MCF 10A (cell line): ENCODE measurements at regions of chr3 and their contacts with region 1.

Region 1: GRCh38 chr3:21484057-21484827 is 266.8 kb downstream of the ZNF385D start:
- DNase-seq: peak; percentile 85
- H3K4me3 Mint-ChIP-seq: no peak overlapping the region
- H3K27ac Mint-ChIP-seq: no peak overlapping the region
- H3K4me1 Mint-ChIP-seq: no peaks in the 10 kb centered on the region
- H3K27me3 Mint-ChIP-seq: no peaks in the 10 kb centered on the region
- CTCF ChIP-seq: peak; percentile 68

Region 2: DNA sequence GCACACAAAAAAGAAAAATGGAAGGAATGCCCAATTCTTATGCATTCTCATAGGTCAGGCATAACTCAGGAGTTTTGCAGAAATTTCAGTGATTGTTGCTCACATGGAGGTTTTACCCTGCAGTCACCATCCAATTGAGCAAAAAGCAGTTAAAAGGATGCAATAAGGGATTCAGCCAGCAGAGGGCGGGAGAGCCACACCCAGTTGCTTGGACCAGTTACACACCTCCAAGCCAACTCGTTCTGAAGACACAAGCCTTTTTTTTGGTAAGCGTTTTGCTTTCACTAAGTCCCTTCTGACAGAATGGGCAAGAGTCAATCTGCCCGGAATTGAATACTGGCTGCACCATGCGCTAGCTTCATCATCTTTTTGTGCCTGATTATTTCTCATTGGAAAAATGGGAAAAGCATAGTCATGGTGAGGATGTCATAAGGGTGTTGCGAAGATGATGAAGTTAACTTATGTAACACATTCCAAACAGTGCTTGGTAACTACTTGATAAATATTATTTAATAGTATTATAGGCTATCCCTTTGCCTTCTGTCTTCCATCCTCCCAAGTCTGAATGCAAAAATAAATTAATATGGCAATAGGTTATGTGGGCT is 1143.8 kb before region 1 on chr3:
- CTCF ChIA-PET with region 1: interaction called, 11 read pairs
- POLR2A ChIA-PET with region 1: no interaction called
- intact Hi-C with region 1: no loop called
- DNase-seq: peak; percentile 81
- H3K4me3 Mint-ChIP-seq: no peak overlapping the region
- H3K27ac Mint-ChIP-seq: no peak overlapping the region
- H3K4me1 Mint-ChIP-seq: no peaks in the 10 kb centered on the region
- H3K27me3 Mint-ChIP-seq: no peaks in the 10 kb centered on the region
- CTCF ChIP-seq: peak; percentile 91

Region 3: GRCh38 chr3:20930034-20930433 is 554.2 kb before region 1 on chr3:
- CTCF ChIA-PET with region 1: interaction called, 4 read pairs
- POLR2A ChIA-PET with region 1: no interaction called
- intact Hi-C with region 1: loop called (anchors 1 kb)
- DNase-seq: peak; percentile 52
- H3K4me3 Mint-ChIP-seq: no peak overlapping the region
- H3K27ac Mint-ChIP-seq: no peak overlapping the region
- H3K4me1 Mint-ChIP-seq: no peaks in the 10 kb centered on the region
- H3K27me3 Mint-ChIP-seq: no peaks in the 10 kb centered on the region
- CTCF ChIP-seq: peak; percentile 40

Region 4: GRCh38 chr3:21158861-21159542 is 325.2 kb before region 1 on chr3:
- CTCF ChIA-PET with region 1: no interaction called
- POLR2A ChIA-PET with region 1: no interaction called
- intact Hi-C with region 1: loop called (anchors 5 kb)
- DNase-seq: peak; percentile 14
- H3K4me3 Mint-ChIP-seq: no peak overlapping the region
- H3K27ac Mint-ChIP-seq: no peak overlapping the region
- H3K4me1 Mint-ChIP-seq: no peaks in the 10 kb centered on the region
- H3K27me3 Mint-ChIP-seq: no peaks in the 10 kb centered on the region
- CTCF ChIP-seq: no peak

Region 5: GRCh38 chr3:21665444-21666100 is 181.3 kb after region 1 on chr3:
- CTCF ChIA-PET with region 1: no interaction called
- POLR2A ChIA-PET with region 1: no interaction called
- intact Hi-C with region 1: no loop called
- DNase-seq: no peak
- H3K4me3 Mint-ChIP-seq: no peak overlapping the region
- H3K27ac Mint-ChIP-seq: no peak overlapping the region
- H3K4me1 Mint-ChIP-seq: no peaks in the 10 kb centered on the region
- H3K27me3 Mint-ChIP-seq: no peaks in the 10 kb centered on the region
- CTCF ChIP-seq: no peak

Region 6: GRCh38 chr3:21752749-21753347 is 268.6 kb after region 1 on chr3:
- CTCF ChIA-PET with region 1: no interaction called
- POLR2A ChIA-PET with region 1: no interaction called
- intact Hi-C with region 1: loop called (anchors 5 kb)
- DNase-seq: peak; percentile 74
- H3K4me3 Mint-ChIP-seq: no peak overlapping the region
- H3K27ac Mint-ChIP-seq: no peak overlapping the region
- H3K4me1 Mint-ChIP-seq: peaks cover 15% of the 10 kb centered on the region
- H3K27me3 Mint-ChIP-seq: no peaks in the 10 kb centered on the region
- CTCF ChIP-seq: peak; percentile 61

Region 7: GRCh38 chr3:22117751-22118346 is 633.6 kb after region 1 on chr3:
- CTCF ChIA-PET with region 1: interaction called, 3 read pairs
- POLR2A ChIA-PET with region 1: no interaction called
- intact Hi-C with region 1: loop called (anchors 5 kb)
- DNase-seq: peak; percentile 56
- H3K4me3 Mint-ChIP-seq: no peak overlapping the region
- H3K27ac Mint-ChIP-seq: no peak overlapping the region
- H3K4me1 Mint-ChIP-seq: peaks cover 17% of the 10 kb centered on the region
- H3K27me3 Mint-ChIP-seq: no peaks in the 10 kb centered on the region
- CTCF ChIP-seq: peak; percentile 51